Calu3 (cell line): ENCODE measurements at regions of chr1 and their contacts with region 1.

Region 1: GRCh38 chr1:158149577-158150269 is 31.0 kb upstream of the CD1D start:
- DNase-seq: peak; percentile 80
- H3K4me3 Mint-ChIP-seq: peak overlapping the region; percentile 62
- H3K27ac Mint-ChIP-seq: peak overlapping the region; percentile 17
- H3K4me1 Mint-ChIP-seq: peaks cover 19% of the 10 kb centered on the region
- H3K27me3 Mint-ChIP-seq: peaks cover 61% of the 10 kb centered on the region
- CTCF ChIP-seq: no peak

Region 2: DNA sequence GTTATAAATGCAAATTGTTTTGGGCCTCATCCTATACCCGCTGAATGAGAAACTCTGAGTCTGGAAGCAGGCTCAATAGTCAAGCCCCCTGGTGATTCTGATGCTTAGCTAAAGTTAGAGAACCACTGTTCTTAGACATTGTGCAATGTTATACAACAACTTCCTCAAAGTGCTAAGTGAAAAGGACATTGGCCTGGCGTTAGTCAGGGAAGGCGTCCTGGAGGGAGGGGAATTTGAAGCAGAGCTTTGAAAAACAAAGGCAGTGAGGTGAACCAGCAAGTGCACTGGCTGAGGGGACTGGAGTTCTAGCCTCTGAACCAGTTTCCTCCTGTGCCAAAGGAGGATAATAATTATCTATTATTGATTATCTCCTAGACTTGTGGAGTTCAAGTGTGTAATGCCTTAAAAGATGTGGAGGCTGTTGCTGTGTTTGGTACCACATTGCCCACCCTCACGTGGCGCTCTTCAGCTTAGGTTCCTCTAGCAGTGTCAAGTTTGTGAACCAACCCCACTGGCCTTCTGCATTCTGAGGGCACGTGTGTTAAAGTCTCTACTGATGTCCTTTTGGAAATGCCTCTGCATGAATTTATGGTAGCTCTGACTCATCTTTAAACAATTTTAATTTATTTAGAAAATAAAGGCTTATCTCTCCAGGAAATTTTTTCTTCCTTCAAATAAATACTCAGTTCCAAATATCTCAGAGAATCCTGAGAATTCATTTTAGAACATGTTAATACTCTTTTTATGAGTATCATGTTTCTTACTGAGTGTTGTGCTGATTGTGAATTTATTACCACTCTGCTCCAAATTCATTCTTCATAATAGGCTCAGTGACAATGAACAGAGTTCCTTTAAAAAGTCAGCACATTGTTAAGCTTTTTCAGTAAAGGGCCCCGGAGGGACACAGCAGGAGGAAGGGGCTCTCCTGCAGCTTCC is 36.3 kb after region 1 on chr1:
- CTCF ChIA-PET with region 1: no interaction called
- intact Hi-C with region 1: loop called (anchors 5 kb)
- DNase-seq: peak; percentile 73
- H3K4me3 Mint-ChIP-seq: no peak overlapping the region
- H3K27ac Mint-ChIP-seq: peak overlapping the region; percentile 11
- H3K4me1 Mint-ChIP-seq: peaks cover 26% of the 10 kb centered on the region
- H3K27me3 Mint-ChIP-seq: peaks cover 14% of the 10 kb centered on the region
- CTCF ChIP-seq: no peak

Region 3: GRCh38 chr1:158227904-158228623 is 78.3 kb after region 1 on chr1:
- CTCF ChIA-PET with region 1: no interaction called
- intact Hi-C with region 1: no loop called
- DNase-seq: no peak
- H3K4me3 Mint-ChIP-seq: no peak overlapping the region
- H3K27ac Mint-ChIP-seq: no peak overlapping the region
- H3K4me1 Mint-ChIP-seq: no peaks in the 10 kb centered on the region
- H3K27me3 Mint-ChIP-seq: peaks cover 34% of the 10 kb centered on the region
- CTCF ChIP-seq: no peak

Region 4: GRCh38 chr1:158329733-158330132 is 180.0 kb after region 1 on chr1:
- CTCF ChIA-PET with region 1: no interaction called
- intact Hi-C with region 1: loop called (anchors 10 kb)
- DNase-seq: peak; percentile 29
- H3K4me3 Mint-ChIP-seq: no peak overlapping the region
- H3K27ac Mint-ChIP-seq: no peak overlapping the region
- H3K4me1 Mint-ChIP-seq: no peaks in the 10 kb centered on the region
- H3K27me3 Mint-ChIP-seq: no peaks in the 10 kb centered on the region
- CTCF ChIP-seq: no peak

Region 5: GRCh38 chr1:158771950-158772866 is 622.5 kb after region 1 on chr1 and contains the start of gene OR6N1:
- CTCF ChIA-PET with region 1: no interaction called
- intact Hi-C with region 1: no loop called
- DNase-seq: no peak
- H3K4me3 Mint-ChIP-seq: no peak within 1 kb of the TSS
- H3K27ac Mint-ChIP-seq: no peak within 1 kb of the TSS
- H3K4me1 Mint-ChIP-seq: no peaks in the 10 kb centered on the region
- H3K27me3 Mint-ChIP-seq: peaks cover 12% of the 10 kb centered on the region
- CTCF ChIP-seq: no peak
- total RNA-seq, gene OR6N1: not detected in 2 replicates